Right cardiac atrium (tissue), 5 donors: ENCODE measurements at regions of chr9 and their contacts with region 1.

Region 1: DNA sequence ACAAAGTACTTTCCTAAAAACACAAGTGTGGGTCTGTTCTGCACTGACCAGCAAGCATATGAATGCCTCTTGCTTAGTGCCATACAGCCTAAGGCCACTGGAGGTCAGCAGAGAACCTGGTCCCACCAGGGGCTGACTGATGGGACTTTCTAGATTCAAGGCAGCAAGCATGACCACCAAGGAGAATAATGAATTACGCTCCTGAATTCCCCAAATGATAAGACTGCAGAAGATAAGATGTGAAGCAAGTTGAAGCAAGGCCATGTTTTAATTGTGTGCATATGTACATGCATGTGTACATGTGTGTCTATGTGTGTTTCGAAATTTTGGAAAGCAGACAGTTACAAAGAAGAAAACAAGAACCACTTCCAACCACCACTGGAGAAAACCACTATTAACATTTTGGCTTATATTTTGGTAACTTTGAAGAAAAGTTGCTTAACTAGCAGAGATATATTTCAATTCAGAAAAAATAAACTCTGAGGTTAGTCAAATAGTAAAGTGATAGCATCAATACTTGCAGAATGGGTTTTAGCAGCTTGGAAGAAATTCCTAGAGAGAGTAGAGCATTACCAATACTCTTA is 70.5 kb downstream of the ERP44 start:
- DNase-seq: peak; percentile 64 to 81 (median 75)
- ATAC-seq: peak; percentile 92 to 95
- H3K4me3 ChIP-seq: no peak overlapping the region
- H3K27ac ChIP-seq: no peak overlapping the region
- H3K4me1 ChIP-seq: no peaks in the 10 kb centered on the region
- H3K27me3 ChIP-seq: no peaks in the 10 kb centered on the region

Region 2: DNA sequence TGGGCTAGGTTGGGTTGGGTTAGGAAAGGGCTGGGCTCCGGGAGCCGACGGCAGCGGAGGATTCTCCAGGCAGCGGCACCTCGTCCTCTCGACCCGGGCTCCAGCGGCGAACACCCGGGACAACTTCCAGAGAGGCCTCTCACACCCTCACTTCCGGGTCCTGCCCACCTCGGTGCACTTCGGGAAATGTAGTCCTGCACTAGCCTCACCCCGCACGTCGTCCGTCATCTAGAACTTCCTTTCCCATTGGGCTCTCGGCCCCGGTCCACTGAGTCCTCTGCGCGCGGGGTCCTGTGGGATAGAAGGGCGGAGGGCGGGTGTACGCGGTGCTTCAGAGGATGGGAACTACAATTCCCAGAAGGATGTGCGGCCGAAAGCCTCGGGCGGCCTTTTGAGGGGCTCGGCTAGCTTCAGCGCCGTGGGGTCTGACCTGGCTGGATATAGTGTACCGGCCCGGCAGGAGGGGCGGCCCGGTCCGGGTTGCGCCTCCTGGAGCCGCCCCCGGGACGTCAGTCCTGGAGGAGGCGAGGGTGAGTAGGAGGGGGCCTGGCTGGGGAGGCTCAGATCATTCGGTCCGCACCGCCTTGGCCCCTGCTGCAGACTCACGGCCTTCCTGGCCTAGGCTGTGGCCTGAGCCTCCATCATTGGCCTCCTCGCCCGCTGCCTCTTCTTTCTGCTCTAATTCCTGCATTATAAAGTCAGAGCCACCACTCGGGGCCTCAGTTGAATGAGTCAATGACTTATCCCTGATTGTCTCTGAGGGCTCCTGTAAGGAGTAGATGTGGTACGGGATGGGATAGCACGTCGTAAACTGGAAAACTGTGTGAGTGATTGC is 70.8 kb after region 1 on chr9 and contains the starts of genes ERP44 and INVS:
- intact Hi-C with region 1: loop called in 1 of 4 experiments (anchors 5 kb)
- DNase-seq: peak; percentile 99
- ATAC-seq: peak; percentile 99 to 100
- H3K4me3 ChIP-seq: peak within 1 kb of the TSS; percentile 75
- H3K27ac ChIP-seq: peak within 1 kb of the TSS; percentile 75
- H3K4me1 ChIP-seq: no peaks in the 10 kb centered on the region
- H3K27me3 ChIP-seq: no peaks in the 10 kb centered on the region
- total RNA-seq, gene ERP44: 13.9 to 19.6 (median 16.9) TPM
- total RNA-seq, gene INVS: 7.9 to 10.1 (median 9.6) TPM

Region 3: GRCh38 chr9:100213730-100214477 is 185.6 kb after region 1 on chr9:
- intact Hi-C with region 1: loop called in 1 of 4 experiments (anchors 5 kb)
- DNase-seq: no peak
- ATAC-seq: no peak
- H3K4me3 ChIP-seq: no peak overlapping the region
- H3K27ac ChIP-seq: no peak overlapping the region
- H3K4me1 ChIP-seq: no peaks in the 10 kb centered on the region
- H3K27me3 ChIP-seq: no peaks in the 10 kb centered on the region

Region 4: DNA sequence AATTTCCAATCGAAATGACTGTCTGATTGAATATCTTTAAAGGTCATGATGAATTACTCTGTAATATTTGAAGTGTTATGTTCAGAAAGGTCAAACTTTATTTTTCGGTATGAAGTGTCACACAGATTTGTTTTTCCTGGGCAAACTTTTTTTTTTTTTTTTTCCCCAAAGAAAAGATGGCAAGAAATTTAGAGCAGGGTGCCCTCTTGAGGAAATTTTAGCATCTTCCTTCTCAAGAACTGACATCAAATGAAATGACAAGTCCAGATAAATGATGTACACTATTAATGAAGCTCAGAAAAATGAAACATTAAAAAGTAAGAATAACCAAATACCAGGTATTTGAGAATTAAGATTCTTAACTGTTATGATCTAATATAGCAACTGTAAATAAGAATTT is 194.4 kb after region 1 on chr9:
- intact Hi-C with region 1: loop called in 1 of 4 experiments (anchors 10 kb)
- DNase-seq: no peak
- ATAC-seq: no peak
- H3K4me3 ChIP-seq: no peak overlapping the region
- H3K27ac ChIP-seq: no peak overlapping the region
- H3K4me1 ChIP-seq: no peaks in the 10 kb centered on the region
- H3K27me3 ChIP-seq: no peaks in the 10 kb centered on the region

Region 5: DNA sequence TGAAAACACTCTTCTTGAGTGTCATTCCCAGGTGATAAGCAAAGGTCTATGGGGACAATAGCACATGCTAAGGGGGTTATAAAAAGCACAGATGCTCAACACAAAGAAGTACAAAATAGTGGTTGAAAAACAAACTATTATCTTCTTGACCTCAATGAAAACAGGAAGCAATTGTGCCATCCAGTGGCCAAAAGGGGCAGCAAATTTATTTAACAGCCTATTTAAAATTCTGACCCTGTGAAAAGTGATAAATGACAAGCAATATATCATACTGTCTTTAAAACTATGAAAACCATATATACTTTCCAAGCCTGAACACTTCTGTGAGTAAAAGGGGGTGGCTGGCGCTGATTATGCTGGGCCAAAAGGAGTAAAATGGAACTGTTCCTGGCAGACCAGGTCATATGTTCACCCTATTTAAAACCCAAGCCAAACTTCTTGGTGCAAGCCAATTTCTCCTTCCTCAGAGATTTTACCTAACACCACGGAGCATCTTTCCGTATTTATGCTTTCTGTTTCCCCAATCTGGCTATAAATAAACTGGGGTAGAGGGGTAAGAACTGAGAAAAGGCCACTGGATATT is 294.8 kb after region 1 on chr9:
- intact Hi-C with region 1: loop called in 1 of 4 experiments (anchors 10 kb)
- DNase-seq: peak in 2 of 3 donors; percentile 14 to 53
- ATAC-seq: no peak
- H3K4me3 ChIP-seq: no peak overlapping the region
- H3K27ac ChIP-seq: no peak overlapping the region
- H3K4me1 ChIP-seq: no peaks in the 10 kb centered on the region
- H3K27me3 ChIP-seq: no peaks in the 10 kb centered on the region